Activated B cell treated with CpG ODN at 0.5 μM for 24 hours (primary cell): ENCODE measurements at regions of chr6 and their contacts with region 1.

Region 1: DNA sequence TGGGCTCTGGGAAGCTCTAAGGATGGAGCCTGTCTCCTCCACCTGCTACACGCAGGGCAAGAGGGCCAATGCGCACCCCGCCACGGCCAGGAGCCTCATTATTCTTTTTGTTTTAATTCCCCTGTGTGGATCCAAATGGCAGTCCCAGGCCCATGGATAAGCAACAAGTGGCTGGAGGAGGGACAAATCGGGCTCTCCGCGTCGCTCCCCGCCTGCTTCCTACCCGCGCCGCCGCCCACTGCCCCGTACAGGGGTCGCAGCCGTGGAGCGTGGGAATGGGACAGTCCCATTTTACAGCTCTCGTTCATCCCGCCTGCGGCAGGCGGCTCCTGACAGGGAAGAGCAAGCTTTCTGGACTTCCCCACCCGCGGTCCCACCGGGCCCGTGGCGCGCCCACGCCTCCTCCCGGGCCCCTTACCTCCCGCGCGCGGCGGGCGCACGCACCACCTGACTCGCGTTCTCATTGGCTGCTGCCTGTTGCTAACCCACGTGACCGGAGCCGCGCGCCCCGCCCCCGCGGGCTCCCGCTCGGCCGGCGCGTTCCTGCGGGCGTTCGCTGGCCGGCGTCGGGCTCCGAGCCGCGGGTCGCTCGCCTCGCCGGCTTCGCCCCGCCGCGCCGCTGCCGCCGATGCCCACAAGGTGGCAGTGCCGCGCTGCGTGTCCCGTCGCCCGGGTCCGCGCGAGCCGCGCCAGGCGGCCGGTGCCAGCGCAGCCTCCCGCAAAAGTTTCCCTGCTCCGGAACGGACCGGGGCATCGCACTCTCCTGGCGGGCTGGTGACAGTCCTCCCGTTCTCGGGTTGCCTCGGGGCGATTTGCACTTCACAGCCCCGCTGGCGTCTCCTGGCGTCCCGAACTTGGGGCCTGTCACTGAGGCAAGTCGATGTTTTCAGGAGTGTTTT is 93.3 kb downstream of the CD83 start:
- DNase-seq: peak; percentile 98
- ATAC-seq: peak; percentile 90
- H3K4me3 Mint-ChIP-seq: peak overlapping the region; percentile 85
- H3K27ac Mint-ChIP-seq: peak overlapping the region; percentile 88
- H3K4me1 Mint-ChIP-seq: peaks cover 45% of the 10 kb centered on the region
- H3K27me3 Mint-ChIP-seq: no peaks in the 10 kb centered on the region
- CTCF ChIP-seq: no peak

Region 2: GRCh38 chr6:13908955-13909381 is 301.9 kb before region 1 on chr6:
- CTCF ChIA-PET with region 1: interaction called, 7 read pairs
- POLR2A ChIA-PET with region 1: no interaction called
- intact Hi-C with region 1: loop called (anchors 1 kb)
- DNase-seq: no peak
- ATAC-seq: peak; percentile 80
- H3K4me3 Mint-ChIP-seq: no peak overlapping the region
- H3K27ac Mint-ChIP-seq: no peak overlapping the region
- H3K4me1 Mint-ChIP-seq: peaks cover 5% of the 10 kb centered on the region
- H3K27me3 Mint-ChIP-seq: peaks cover 4% of the 10 kb centered on the region
- CTCF ChIP-seq: peak; percentile 91

Region 3: GRCh38 chr6:14396826-14397517 is 186.1 kb after region 1 on chr6:
- CTCF ChIA-PET with region 1: no interaction called
- POLR2A ChIA-PET with region 1: no interaction called
- intact Hi-C with region 1: loop called (anchors 5 kb)
- DNase-seq: peak; percentile 30
- ATAC-seq: peak; percentile 67
- H3K4me3 Mint-ChIP-seq: peak overlapping the region; percentile 44
- H3K27ac Mint-ChIP-seq: peak overlapping the region; percentile 54
- H3K4me1 Mint-ChIP-seq: peaks cover 25% of the 10 kb centered on the region
- H3K27me3 Mint-ChIP-seq: no peaks in the 10 kb centered on the region
- CTCF ChIP-seq: no peak

Region 4: GRCh38 chr6:14510038-14510437 is 299.1 kb after region 1 on chr6:
- CTCF ChIA-PET with region 1: no interaction called
- POLR2A ChIA-PET with region 1: no interaction called
- intact Hi-C with region 1: no loop called
- DNase-seq: no peak
- ATAC-seq: no peak
- H3K4me3 Mint-ChIP-seq: no peak overlapping the region
- H3K27ac Mint-ChIP-seq: no peak overlapping the region
- H3K4me1 Mint-ChIP-seq: peaks cover 8% of the 10 kb centered on the region
- H3K27me3 Mint-ChIP-seq: no peaks in the 10 kb centered on the region
- CTCF ChIP-seq: no peak

Region 5: GRCh38 chr6:14734416-14735340 is 523.8 kb after region 1 on chr6:
- CTCF ChIA-PET with region 1: no interaction called
- POLR2A ChIA-PET with region 1: no interaction called
- intact Hi-C with region 1: loop called (anchors 5 kb)
- DNase-seq: no peak
- ATAC-seq: peak; percentile 81
- H3K4me3 Mint-ChIP-seq: peak overlapping the region; percentile 71
- H3K27ac Mint-ChIP-seq: peak overlapping the region; percentile 76
- H3K4me1 Mint-ChIP-seq: peaks cover 99% of the 10 kb centered on the region
- H3K27me3 Mint-ChIP-seq: no peaks in the 10 kb centered on the region
- CTCF ChIP-seq: no peak

Region 6: DNA sequence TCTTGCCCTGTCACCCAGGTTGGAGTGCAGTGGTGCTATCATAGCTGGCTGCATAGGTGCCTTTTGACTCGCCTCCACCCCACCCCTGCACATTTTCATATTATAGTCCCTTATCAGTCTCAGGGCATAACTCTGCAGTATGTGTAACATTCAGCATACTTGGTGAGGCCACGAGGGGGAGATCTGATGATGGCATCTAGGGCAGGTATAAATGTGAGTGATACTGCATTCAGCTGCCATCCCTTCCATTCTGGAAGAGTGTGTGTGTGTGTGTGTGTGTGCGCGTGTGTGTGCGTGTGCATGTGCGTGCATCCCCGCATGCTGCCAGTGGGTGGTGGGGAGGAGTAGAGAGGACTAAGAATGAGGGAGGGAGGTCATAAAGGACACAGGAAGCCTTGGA is 1116.4 kb after region 1 on chr6:
- CTCF ChIA-PET with region 1: no interaction called
- POLR2A ChIA-PET with region 1: no interaction called
- intact Hi-C with region 1: loop called (anchors 5 kb)
- DNase-seq: no peak
- ATAC-seq: peak; percentile 74
- H3K4me3 Mint-ChIP-seq: peak overlapping the region; percentile 56
- H3K27ac Mint-ChIP-seq: peak overlapping the region; percentile 89
- H3K4me1 Mint-ChIP-seq: peaks cover 96% of the 10 kb centered on the region
- H3K27me3 Mint-ChIP-seq: no peaks in the 10 kb centered on the region
- CTCF ChIP-seq: no peak

Region 7: DNA sequence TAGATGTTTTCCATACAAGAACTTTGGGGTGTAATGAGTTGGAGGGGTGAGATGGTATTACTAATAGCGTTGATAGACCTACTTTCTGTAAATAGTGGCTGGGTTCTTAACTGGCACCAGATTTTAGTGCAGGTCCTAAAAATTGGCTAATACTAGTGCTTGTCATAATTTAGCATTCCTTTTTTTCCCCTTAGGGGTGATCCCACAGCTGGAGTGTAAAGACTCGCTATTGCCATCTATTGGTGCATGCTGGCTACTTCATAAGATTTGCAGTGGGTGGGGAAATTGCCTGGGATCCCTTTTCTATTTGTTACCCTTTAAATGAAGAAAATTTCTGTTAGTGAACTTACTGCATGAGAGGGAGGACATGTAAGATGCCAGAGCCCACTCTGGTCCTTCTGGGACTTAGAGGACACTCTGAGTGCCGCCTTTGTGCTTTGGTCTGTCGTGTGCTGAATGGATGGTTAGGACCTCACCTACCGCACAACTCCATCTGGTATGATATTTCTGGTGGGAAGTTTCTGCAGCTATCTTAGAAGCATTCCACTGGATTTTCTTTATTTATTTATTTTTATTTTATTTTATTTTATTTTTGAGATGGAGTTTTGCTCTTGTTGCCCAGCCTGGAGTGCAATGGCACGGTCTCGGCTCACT is 1230.4 kb after region 1 on chr6:
- CTCF ChIA-PET with region 1: interaction called, 3 read pairs
- POLR2A ChIA-PET with region 1: no interaction called
- intact Hi-C with region 1: loop called (anchors 1 kb)
- DNase-seq: no peak
- ATAC-seq: peak; percentile 71
- H3K4me3 Mint-ChIP-seq: no peak overlapping the region
- H3K27ac Mint-ChIP-seq: peak overlapping the region; percentile 5
- H3K4me1 Mint-ChIP-seq: peaks cover 67% of the 10 kb centered on the region
- H3K27me3 Mint-ChIP-seq: no peaks in the 10 kb centered on the region
- CTCF ChIP-seq: no peak

Region 8: GRCh38 chr6:15621203-15622044 is 1410.5 kb after region 1 on chr6:
- CTCF ChIA-PET with region 1: interaction called, 6 read pairs
- POLR2A ChIA-PET with region 1: no interaction called
- intact Hi-C with region 1: loop called (anchors 2 kb)
- DNase-seq: no peak
- ATAC-seq: peak; percentile 79
- H3K4me3 Mint-ChIP-seq: no peak overlapping the region
- H3K27ac Mint-ChIP-seq: peak overlapping the region; percentile 38
- H3K4me1 Mint-ChIP-seq: peaks cover 34% of the 10 kb centered on the region
- H3K27me3 Mint-ChIP-seq: no peaks in the 10 kb centered on the region
- CTCF ChIP-seq: no peak